Activated CD4-positive, alpha-beta T cell treated with anti-CD3 and anti-CD28 coated beads for 36 hours (primary cell): ENCODE measurements at regions of chr12 and their contacts with region 1.

Region 1: GRCh38 chr12:100234598-100235304 is 32.1 kb downstream of the DEPDC4 start:
- DNase-seq: peak; percentile 6
- ATAC-seq: no peak
- H3K4me3 Mint-ChIP-seq: no peak overlapping the region
- H3K27ac Mint-ChIP-seq: no peak overlapping the region
- H3K4me1 Mint-ChIP-seq: no peaks in the 10 kb centered on the region
- H3K27me3 Mint-ChIP-seq: no peaks in the 10 kb centered on the region

Region 2: GRCh38 chr12:100404769-100405407 is 170.1 kb after region 1 on chr12:
- CTCF ChIA-PET with region 1: interaction called, 13 read pairs
- POLR2A ChIA-PET with region 1: no interaction called
- intact Hi-C with region 1: loop called in 1 of 2 experiments (anchors 1 kb)
- DNase-seq: peak; percentile 74
- ATAC-seq: peak; percentile 68
- H3K4me3 Mint-ChIP-seq: no peak overlapping the region
- H3K27ac Mint-ChIP-seq: no peak overlapping the region
- H3K4me1 Mint-ChIP-seq: no peaks in the 10 kb centered on the region
- H3K27me3 Mint-ChIP-seq: peaks cover 4% of the 10 kb centered on the region

Region 3: GRCh38 chr12:100554608-100555077 is 319.9 kb after region 1 on chr12:
- CTCF ChIA-PET with region 1: interaction called, 11 read pairs
- POLR2A ChIA-PET with region 1: no interaction called
- intact Hi-C with region 1: loop called (anchors 1 kb)
- DNase-seq: no peak
- ATAC-seq: no peak
- H3K4me3 Mint-ChIP-seq: no peak overlapping the region
- H3K27ac Mint-ChIP-seq: no peak overlapping the region
- H3K4me1 Mint-ChIP-seq: no peaks in the 10 kb centered on the region
- H3K27me3 Mint-ChIP-seq: peaks cover 2% of the 10 kb centered on the region

Region 4: DNA sequence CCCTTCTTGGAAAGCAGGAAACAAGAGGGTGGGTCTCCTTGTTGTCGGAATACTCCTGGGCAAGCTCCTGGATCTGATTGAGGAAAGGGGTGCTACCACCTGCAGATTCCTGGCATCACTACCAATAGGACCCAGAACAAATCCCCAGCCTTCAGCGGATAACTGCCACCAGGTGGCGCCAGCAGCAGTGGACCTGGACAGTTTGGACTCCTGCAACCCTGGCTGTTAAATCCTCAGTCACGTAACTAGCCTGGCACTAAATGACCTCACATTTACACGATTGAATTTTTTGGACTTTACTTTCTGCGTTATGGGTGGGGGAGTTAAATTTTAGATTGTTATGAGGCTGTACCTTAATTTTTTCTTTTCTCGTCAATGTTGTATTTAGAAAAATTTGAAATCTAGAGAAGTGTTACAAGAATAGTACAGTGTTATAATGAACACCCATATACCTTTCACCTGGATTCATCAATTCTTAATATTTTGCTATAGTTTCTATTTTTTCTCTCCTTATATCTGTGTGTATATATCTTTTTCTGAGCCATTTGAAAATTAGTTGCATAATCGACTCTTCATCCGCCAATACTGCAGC is 434.3 kb after region 1 on chr12:
- CTCF ChIA-PET with region 1: no interaction called
- POLR2A ChIA-PET with region 1: no interaction called
- intact Hi-C with region 1: loop called in 1 of 2 experiments (anchors 10 kb)
- DNase-seq: peak; percentile 79
- ATAC-seq: peak; percentile 51
- H3K4me3 Mint-ChIP-seq: no peak overlapping the region
- H3K27ac Mint-ChIP-seq: no peak overlapping the region
- H3K4me1 Mint-ChIP-seq: no peaks in the 10 kb centered on the region
- H3K27me3 Mint-ChIP-seq: peaks cover 9% of the 10 kb centered on the region

Region 5: DNA sequence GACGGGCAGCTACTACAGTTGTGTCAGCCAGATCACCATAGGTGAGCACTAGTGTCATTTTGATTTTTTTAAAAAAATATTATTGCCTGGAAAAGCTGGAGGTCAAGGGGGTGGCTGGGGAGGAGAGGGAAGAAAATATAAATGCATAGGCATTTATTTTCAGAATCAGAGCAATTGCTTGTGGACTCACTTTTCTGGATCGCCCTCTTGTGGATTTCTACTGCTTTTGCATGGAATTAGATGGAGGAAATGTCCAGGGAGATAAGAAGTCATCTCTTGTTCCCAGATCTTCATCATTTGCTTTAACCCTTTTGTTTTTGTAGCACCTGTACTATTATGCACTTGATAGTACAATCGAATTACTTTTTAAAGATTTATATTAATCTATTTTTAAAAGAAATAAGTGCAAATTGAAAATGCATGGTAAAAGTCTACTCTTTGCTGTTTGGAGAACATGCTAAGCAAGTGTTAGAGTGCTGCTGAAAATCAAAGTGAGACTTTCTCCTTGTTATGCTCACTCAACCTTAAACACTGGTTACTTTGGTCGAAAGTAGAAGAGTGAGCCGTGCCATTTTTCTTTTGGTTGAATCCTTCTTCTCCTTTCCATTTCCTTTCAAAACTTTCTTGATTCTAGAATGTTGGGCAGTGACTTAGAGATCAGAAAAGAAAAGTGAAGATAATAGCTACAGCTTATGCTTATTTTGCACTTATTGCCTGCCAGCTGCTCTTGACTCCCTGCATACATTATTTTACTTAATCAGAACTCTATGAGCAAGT is 499.3 kb after region 1 on chr12:
- CTCF ChIA-PET with region 1: no interaction called
- POLR2A ChIA-PET with region 1: no interaction called
- intact Hi-C with region 1: loop called in 1 of 2 experiments (anchors 5 kb)
- DNase-seq: no peak
- ATAC-seq: no peak
- H3K4me3 Mint-ChIP-seq: no peak overlapping the region
- H3K27ac Mint-ChIP-seq: no peak overlapping the region
- H3K4me1 Mint-ChIP-seq: no peaks in the 10 kb centered on the region
- H3K27me3 Mint-ChIP-seq: peaks cover 13% of the 10 kb centered on the region

Region 6: DNA sequence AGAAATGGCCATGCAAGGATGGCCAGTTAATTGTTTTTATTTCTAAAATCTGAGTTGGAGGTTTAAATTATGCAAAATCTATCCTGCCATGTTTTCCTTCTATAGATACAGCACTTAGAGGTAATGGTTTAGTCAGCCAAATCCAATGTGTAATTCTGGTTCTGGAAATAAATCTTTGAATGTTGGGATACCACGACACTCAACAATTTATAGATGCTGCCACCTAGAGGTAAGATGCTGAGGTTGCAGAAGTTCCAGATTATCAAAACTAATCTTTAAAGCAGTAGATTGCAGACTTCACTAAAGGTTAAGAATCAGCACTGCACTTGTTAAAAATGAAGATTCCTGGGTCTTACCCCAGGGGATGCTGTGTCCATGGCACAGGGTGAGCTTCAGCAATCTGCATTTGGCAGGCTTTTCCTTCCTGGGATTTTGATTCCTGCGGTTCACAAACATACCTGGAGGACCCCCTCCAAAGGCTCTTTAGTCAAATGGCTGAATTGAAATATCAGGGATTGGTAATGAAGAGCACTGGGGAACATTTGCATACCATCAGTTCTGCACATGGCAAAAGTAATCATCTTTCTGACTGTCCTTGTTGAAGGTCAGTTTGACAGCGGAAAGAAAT is 506.4 kb after region 1 on chr12:
- CTCF ChIA-PET with region 1: no interaction called
- POLR2A ChIA-PET with region 1: no interaction called
- intact Hi-C with region 1: loop called in 1 of 2 experiments (anchors 10 kb)
- DNase-seq: no peak
- ATAC-seq: no peak
- H3K4me3 Mint-ChIP-seq: no peak overlapping the region
- H3K27ac Mint-ChIP-seq: no peak overlapping the region
- H3K4me1 Mint-ChIP-seq: no peaks in the 10 kb centered on the region
- H3K27me3 Mint-ChIP-seq: peaks cover 5% of the 10 kb centered on the region